ENCODE measurements at regions of chr18 and their contacts with region 1.

Region 1: DNA sequence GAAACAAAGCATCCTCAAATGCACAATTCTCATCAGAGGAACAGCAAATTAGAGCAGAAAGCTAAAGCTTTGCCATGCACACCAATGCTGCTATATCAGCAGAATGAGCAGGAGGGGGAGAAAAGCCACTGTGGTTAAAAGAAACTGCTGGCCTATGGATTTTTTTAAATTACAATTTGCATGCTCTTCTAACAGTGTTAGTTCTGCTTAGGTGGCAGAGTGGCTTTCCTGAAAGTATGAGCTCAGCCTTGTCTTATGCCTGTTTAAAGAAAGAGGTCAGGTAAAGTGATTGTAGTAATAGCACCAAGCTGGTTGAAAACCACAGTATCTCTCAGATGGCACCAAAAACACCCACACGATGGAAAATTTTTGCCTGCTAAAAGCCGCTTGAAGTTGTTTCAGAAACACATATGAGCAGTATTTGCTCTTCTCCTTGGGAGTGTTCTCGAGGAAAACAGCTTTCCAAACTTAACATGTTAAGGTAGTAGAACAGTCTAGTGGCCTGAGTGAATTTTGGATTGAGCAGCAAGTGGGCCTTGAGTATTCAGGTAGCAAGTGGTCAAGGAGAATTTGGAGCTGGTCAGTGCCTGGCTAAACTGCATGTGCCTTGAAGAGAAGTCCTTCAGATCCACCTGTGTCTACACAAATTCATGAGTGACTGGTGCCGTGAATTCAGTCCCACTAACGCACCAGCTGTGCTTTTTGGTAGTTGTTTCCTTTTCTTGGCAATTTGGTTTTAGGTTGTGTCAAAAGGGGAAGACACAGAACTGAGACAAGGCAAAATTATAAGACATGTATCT is 19.6 kb upstream of the NDUFV2 start:
- DNase-seq: peak; percentile 85
- ATAC-seq: peak; percentile 86
- H3K4me3 Mint-ChIP-seq: peak overlapping the region; percentile 55
- H3K27ac Mint-ChIP-seq: peak overlapping the region; percentile 94
- H3K4me1 Mint-ChIP-seq: peaks cover 38% of the 10 kb centered on the region
- H3K27me3 Mint-ChIP-seq: no peaks in the 10 kb centered on the region
- CTCF ChIP-seq: no peak

Region 2: GRCh38 chr18:8389391-8390340 is 693.2 kb before region 1 on chr18:
- CTCF ChIA-PET with region 1: no interaction called
- POLR2A ChIA-PET with region 1: no interaction called
- intact Hi-C with region 1: no loop called
- DNase-seq: peak; percentile 61
- ATAC-seq: no peak
- H3K4me3 Mint-ChIP-seq: no peak overlapping the region
- H3K27ac Mint-ChIP-seq: no peak overlapping the region
- H3K4me1 Mint-ChIP-seq: no peaks in the 10 kb centered on the region
- H3K27me3 Mint-ChIP-seq: no peaks in the 10 kb centered on the region
- CTCF ChIP-seq: peak; percentile 69

Region 3: GRCh38 chr18:9095297-9096006 is 12.5 kb after region 1 on chr18:
- CTCF ChIA-PET with region 1: interaction called, 6 read pairs
- POLR2A ChIA-PET with region 1: interaction called, 64 read pairs
- intact Hi-C with region 1: loop called (anchors 1 kb)
- DNase-seq: peak; percentile 89
- ATAC-seq: peak; percentile 71
- H3K4me3 Mint-ChIP-seq: peak overlapping the region; percentile 51
- H3K27ac Mint-ChIP-seq: peak overlapping the region; percentile 96
- H3K4me1 Mint-ChIP-seq: peaks cover 56% of the 10 kb centered on the region
- H3K27me3 Mint-ChIP-seq: no peaks in the 10 kb centered on the region
- CTCF ChIP-seq: no peak

Region 4: GRCh38 chr18:9102508-9103375 is 19.8 kb after region 1 on chr18 and contains the start of gene NDUFV2:
- CTCF ChIA-PET with region 1: interaction called, 27 read pairs
- POLR2A ChIA-PET with region 1: interaction called, 64 read pairs
- intact Hi-C with region 1: no loop called
- DNase-seq: peak; percentile 98
- ATAC-seq: peak; percentile 95
- H3K4me3 Mint-ChIP-seq: peak within 1 kb of the TSS; percentile 86
- H3K27ac Mint-ChIP-seq: peak within 1 kb of the TSS; percentile 97
- H3K4me1 Mint-ChIP-seq: peaks cover 43% of the 10 kb centered on the region
- H3K27me3 Mint-ChIP-seq: no peaks in the 10 kb centered on the region
- CTCF ChIP-seq: no peak
- total RNA-seq, gene NDUFV2: 324 to 332 TPM

Measured in activated CD8-positive, alpha-beta T cell treated with anti-CD3 and anti-CD28 coated beads for 36 hours (primary cell).